Endothelial cell of umbilical vein (primary cell): ENCODE measurements at regions of chrX and their contacts with region 1.

Region 1: GRCh38 chrX:103464774-103465117 is 54.5 kb downstream of the RAB40A start:
- DNase-seq: peak; percentile 84
- H3K4me3 ChIP-seq: peak overlapping the region in 1 of 3 experiments; percentile 51
- H3K27ac ChIP-seq: no peak overlapping the region
- H3K4me1 ChIP-seq: no peaks in the 10 kb centered on the region
- H3K27me3 ChIP-seq: no peaks in the 10 kb centered on the region
- CTCF ChIP-seq: peak; percentile 69 to 71
- POLR2A ChIP-seq: no peak

Region 2: DNA sequence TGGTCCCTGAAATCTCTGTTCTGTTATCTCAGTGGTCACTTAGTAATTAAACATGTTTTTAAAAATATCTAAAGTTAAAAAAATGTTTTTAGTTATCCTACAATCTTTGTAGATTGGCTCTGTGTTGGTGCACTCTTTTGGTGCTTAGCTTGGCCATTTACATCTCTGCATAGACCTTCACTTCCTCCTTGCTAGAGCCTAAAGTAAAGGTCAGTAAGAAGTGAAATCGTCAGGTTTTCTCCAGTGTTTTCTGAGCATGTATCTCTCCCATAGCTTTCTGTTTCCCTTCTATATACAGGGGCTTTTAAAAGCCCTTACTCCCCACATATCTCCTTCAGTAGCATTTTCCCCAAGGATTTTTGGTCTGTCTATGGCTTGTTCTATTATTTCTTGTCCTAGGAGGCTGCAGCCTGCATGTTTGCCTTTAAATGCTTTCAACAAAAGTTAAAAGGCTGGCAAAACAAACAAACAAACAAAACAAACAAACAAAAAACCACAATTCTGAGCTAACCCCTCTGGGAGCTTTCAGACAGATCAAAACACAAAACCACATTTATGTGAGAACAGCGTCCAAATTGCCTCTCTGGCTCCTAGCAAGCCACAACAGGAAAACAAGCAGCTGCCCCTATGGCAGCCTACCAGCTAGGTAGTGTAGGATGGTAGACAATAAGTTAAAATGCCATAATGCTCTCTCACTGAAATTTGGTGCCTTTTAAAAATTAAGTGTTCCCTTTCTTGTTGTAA is 779.8 kb before region 1 on chrX:
- CTCF ChIA-PET with region 1: no interaction called
- POLR2A ChIA-PET with region 1: no interaction called
- dilution Hi-C with region 1: no loop called
- intact Hi-C with region 1: no loop called
- DNase-seq: no peak
- H3K4me3 ChIP-seq: no peak overlapping the region
- H3K27ac ChIP-seq: no peak overlapping the region
- H3K4me1 ChIP-seq: no peaks in the 10 kb centered on the region
- H3K27me3 ChIP-seq: no peaks in the 10 kb centered on the region
- CTCF ChIP-seq: no peak
- POLR2A ChIP-seq: no peak

Region 3: GRCh38 chrX:103214870-103215424 is 249.8 kb before region 1 on chrX and contains the start of gene BEX4:
- CTCF ChIA-PET with region 1: interaction called, 71 read pairs
- POLR2A ChIA-PET with region 1: no interaction called
- dilution Hi-C with region 1: no loop called
- intact Hi-C with region 1: loop called (anchors 1 kb)
- DNase-seq: peak; percentile 64
- H3K4me3 ChIP-seq: peak within 1 kb of the TSS; percentile 43 to 94 (median 61)
- H3K27ac ChIP-seq: peak within 1 kb of the TSS; percentile 70
- H3K4me1 ChIP-seq: peaks cover 5% of the 10 kb centered on the region
- H3K27me3 ChIP-seq: no peaks in the 10 kb centered on the region
- CTCF ChIP-seq: no peak
- POLR2A ChIP-seq: peak; percentile 62
- total RNA-seq, gene BEX4: 28.0 and 30.3 TPM in 2 replicates

Region 4: GRCh38 chrX:103254921-103255493 is 209.7 kb before region 1 on chrX and contains the start of gene TCEAL8:
- CTCF ChIA-PET with region 1: interaction called, 27 read pairs
- POLR2A ChIA-PET with region 1: no interaction called
- dilution Hi-C with region 1: no loop called
- intact Hi-C with region 1: loop called (anchors 2 kb)
- DNase-seq: peak; percentile 77
- H3K4me3 ChIP-seq: peak within 1 kb of the TSS; percentile 72 to 91 (median 76)
- H3K27ac ChIP-seq: peak within 1 kb of the TSS; percentile 70
- H3K4me1 ChIP-seq: peaks cover 12% of the 10 kb centered on the region
- H3K27me3 ChIP-seq: peaks cover 0 to 4% of the 10 kb centered on the region in 2 experiments
- CTCF ChIP-seq: no peak
- POLR2A ChIP-seq: peak; percentile 45
- total RNA-seq, gene TCEAL8: 51.8 and 52.0 TPM in 2 replicates

Region 5: GRCh38 chrX:103356130-103356798 is 108.5 kb before region 1 on chrX and contains the start of gene TCEAL9:
- CTCF ChIA-PET with region 1: interaction called, 27 read pairs
- POLR2A ChIA-PET with region 1: no interaction called
- dilution Hi-C with region 1: no loop called
- intact Hi-C with region 1: loop called (anchors 5 kb)
- DNase-seq: peak; percentile 79
- H3K4me3 ChIP-seq: peak within 1 kb of the TSS; percentile 81 to 97 (median 90)
- H3K27ac ChIP-seq: peak within 1 kb of the TSS; percentile 91
- H3K4me1 ChIP-seq: peaks cover 18% of the 10 kb centered on the region
- H3K27me3 ChIP-seq: no peaks in the 10 kb centered on the region
- CTCF ChIP-seq: no peak
- POLR2A ChIP-seq: peak; percentile 78
- total RNA-seq, gene TCEAL9: 98.3 and 99.2 TPM in 2 replicates

Region 6: DNA sequence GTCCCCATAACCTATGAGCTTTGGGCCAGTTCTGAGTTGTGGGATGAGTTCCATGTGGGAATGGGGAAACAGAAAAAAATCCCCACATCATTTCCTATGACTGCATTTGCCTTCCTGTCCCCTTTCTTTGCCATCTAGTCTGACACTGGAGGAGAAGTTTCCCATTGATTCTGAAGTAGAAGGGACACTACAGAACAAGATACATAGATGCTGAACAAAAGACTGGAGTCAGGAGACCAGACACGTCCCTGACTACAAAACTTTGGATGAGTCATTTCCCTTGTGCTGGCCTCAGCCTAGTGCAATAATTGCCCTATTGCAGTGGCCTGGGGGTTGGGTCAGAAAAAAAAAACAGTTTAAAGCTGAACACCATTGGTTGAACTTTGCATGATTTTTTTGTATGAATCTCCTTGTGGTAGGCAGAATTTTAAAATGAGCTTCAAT is 66.3 kb before region 1 on chrX:
- CTCF ChIA-PET with region 1: interaction called, 4 read pairs
- POLR2A ChIA-PET with region 1: no interaction called
- dilution Hi-C with region 1: no loop called
- intact Hi-C with region 1: loop called (anchors 1 kb)
- DNase-seq: peak; percentile 73
- H3K4me3 ChIP-seq: no peak overlapping the region
- H3K27ac ChIP-seq: peak overlapping the region; percentile 92
- H3K4me1 ChIP-seq: peaks cover 30% of the 10 kb centered on the region
- H3K27me3 ChIP-seq: no peaks in the 10 kb centered on the region
- CTCF ChIP-seq: no peak
- POLR2A ChIP-seq: no peak

Region 7: DNA sequence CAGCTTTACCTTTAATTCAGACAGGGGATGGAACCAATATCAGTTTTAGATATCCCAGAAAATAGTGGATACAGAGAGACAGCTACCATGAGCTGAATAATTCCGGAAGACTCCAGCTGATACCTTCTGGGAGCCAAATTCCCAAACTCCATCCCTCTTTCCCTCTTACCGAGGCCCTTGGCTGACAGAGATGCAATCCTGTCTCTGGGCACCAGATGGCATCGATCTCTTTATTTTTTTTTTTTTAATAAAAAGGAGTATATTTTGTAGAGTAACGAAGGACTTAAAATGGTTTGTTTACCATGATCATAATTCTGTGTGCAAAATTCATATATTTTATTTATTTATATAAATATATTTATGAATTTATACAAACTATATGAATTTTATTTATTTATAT is 23.6 kb after region 1 on chrX:
- CTCF ChIA-PET with region 1: interaction called, 13 read pairs
- POLR2A ChIA-PET with region 1: no interaction called
- dilution Hi-C with region 1: no loop called
- intact Hi-C with region 1: no loop called
- DNase-seq: peak; percentile 6
- H3K4me3 ChIP-seq: no peak overlapping the region
- H3K27ac ChIP-seq: no peak overlapping the region
- H3K4me1 ChIP-seq: no peaks in the 10 kb centered on the region
- H3K27me3 ChIP-seq: no peaks in the 10 kb centered on the region
- CTCF ChIP-seq: peak; percentile 7 to 25
- POLR2A ChIP-seq: no peak